ENCODE measurements at regions of chr17 and their contacts with region 1.

Region 1: DNA sequence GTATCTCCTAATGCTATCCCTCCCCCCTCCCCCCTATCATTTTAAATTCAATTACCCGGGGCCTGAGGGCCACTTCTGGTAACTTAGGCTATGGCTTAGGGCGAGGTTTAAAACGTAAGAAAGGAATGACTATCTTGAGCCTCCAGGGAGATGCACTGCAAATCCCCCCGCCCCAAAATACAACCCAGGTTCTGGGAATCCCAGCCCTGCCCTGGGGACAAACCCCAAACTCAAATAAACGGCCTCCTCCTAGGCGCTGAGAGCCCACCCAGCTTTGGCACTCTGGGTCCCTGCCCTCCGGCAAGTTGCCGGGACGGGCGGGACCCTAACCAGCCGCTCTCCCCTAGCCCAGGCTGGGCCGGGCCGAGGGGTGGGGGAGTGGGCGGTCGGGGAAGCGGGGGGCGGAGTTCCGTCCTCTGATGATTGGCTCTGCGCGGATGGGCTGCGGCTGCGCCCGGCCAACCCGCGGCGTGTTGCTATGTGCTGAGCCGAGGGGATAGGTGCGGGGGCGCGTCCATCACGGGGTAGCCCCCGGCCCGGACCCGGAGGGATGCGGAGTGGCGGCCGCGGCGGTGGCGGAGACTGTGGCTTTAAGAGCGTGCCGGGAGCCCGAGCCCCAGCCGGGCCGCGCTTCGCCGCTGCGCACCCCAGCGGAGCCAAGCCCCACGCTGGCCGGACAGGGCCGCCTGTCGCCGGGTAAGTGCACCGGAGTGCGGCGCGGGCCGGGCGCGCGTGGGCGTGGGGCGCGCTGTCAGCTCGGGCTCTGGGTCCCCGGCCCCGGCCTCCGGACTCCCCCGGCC is at the start of gene YPEL2:
- DNase-seq: peak; percentile 98 to 99 (median 98)
- ATAC-seq: peak; percentile 95 to 97
- H3K4me3 ChIP-seq: peak within 1 kb of the TSS; percentile 93
- H3K27ac ChIP-seq: peak within 1 kb of the TSS; percentile 96
- H3K4me1 ChIP-seq: peaks cover 15% of the 10 kb centered on the region
- H3K27me3 ChIP-seq: no peaks in the 10 kb centered on the region
- total RNA-seq, gene YPEL2: 14.5 to 33.9 (median 23.2) TPM

Region 2: GRCh38 chr17:59287452-59287851 is 43.9 kb before region 1 on chr17:
- intact Hi-C with region 1: no loop called
- DNase-seq: no peak
- ATAC-seq: peak; percentile 33 to 58
- H3K4me3 ChIP-seq: no peak overlapping the region
- H3K27ac ChIP-seq: no peak overlapping the region
- H3K4me1 ChIP-seq: no peaks in the 10 kb centered on the region
- H3K27me3 ChIP-seq: no peaks in the 10 kb centered on the region

Region 3: DNA sequence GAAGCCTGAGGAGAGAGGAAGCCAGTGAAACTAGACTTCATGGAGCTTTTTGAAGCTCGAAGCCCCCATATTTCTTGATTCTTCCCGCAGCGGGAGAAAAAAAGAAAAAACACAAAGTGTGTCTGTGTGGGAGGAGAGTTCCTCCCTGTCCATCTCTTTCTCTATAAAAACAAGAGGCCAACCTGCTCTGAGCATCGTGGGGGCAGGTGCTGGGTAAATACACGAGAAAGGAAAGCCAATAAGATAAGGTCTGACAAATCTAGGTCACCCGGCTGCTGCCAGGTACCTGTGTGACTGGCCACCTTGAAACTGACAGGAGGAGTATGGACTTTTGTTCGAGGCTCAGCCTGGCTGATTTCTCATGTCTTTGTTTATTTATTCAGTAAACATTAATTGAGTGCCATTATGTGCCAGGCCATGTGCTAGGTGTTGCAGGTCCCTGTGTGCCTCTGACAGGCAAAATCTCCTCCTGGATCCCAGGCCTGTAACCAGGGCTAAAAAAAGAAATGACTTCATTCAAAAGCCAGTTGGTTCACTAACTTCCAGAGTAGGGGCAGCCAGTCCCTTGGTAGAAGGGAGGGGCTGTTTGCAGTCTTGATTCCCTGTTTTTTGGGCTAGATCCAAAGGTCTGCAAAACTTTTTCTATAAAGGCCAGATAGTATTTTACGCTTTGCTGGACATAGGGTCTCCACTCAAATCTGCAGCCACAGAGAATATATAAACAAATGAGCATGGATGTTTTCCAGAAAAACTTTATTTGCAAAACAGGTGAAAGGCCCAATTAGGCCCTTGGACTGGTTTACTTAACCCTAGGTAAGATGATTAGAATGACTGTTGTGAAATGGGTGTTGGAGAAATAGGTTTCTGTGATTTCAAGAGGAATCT is 35.7 kb after region 1 on chr17:
- intact Hi-C with region 1: loop called in 2 of 4 experiments (anchors 2 to 5 kb)
- DNase-seq: peak in 1 of 3 donors; percentile 53
- ATAC-seq: peak; percentile 75 to 76
- H3K4me3 ChIP-seq: no peak overlapping the region
- H3K27ac ChIP-seq: peak overlapping the region; percentile 99
- H3K4me1 ChIP-seq: peaks cover 62% of the 10 kb centered on the region
- H3K27me3 ChIP-seq: no peaks in the 10 kb centered on the region

Region 4: GRCh38 chr17:59372138-59372857 is 41.0 kb after region 1 on chr17:
- intact Hi-C with region 1: loop called in 2 of 4 experiments (anchors 2 to 5 kb)
- DNase-seq: peak in 1 of 3 donors; percentile 51
- ATAC-seq: peak; percentile 79 to 92
- H3K4me3 ChIP-seq: no peak overlapping the region
- H3K27ac ChIP-seq: peak overlapping the region; percentile 97
- H3K4me1 ChIP-seq: peaks cover 56% of the 10 kb centered on the region
- H3K27me3 ChIP-seq: no peaks in the 10 kb centered on the region

Region 5: DNA sequence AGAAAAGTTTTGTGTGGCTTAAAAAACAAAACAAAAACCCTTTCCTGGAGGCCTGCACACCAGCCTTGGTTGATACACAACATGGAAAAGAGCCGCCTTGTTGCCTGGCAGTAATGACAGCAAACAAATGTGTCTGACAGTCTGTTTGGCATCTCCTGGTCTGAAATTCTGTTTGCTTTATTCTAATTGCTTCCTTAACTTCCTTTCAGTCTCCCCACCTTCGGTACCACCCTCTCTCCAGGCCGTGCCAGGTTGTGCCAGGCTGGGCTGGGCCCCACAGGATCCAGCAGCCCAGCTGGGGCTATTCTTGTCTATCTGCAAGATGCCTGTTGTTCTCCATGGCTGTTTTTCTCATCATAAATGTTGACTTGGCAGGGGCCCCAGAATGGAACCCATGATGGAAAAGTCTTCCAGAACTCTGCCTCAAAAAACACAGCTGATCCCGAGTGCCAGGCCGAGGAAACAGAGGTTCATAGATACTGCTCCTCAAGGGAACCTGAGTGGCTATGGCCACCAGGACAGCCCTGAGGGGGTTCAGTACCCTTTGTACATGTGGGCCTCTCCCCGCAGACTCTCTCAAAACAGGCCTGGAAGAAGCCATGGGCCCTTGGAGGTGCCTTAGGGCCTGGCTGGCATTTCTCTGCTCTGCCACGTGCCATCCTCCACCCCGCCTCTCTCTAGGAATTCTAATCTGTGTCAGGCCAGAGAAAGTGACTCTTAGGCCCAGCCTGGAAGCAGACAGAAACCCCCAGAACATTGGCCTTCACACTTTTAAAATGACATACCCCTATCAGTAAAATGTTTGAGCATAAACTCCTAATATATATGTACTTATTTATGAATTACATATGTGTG is 50.6 kb after region 1 on chr17:
- intact Hi-C with region 1: loop called in 1 of 4 experiments (anchors 10 kb)
- DNase-seq: peak; percentile 51 to 78 (median 77)
- ATAC-seq: peak; percentile 81 to 82
- H3K4me3 ChIP-seq: no peak overlapping the region
- H3K27ac ChIP-seq: peak overlapping the region; percentile 94
- H3K4me1 ChIP-seq: peaks cover 24% of the 10 kb centered on the region
- H3K27me3 ChIP-seq: no peaks in the 10 kb centered on the region

Region 6: DNA sequence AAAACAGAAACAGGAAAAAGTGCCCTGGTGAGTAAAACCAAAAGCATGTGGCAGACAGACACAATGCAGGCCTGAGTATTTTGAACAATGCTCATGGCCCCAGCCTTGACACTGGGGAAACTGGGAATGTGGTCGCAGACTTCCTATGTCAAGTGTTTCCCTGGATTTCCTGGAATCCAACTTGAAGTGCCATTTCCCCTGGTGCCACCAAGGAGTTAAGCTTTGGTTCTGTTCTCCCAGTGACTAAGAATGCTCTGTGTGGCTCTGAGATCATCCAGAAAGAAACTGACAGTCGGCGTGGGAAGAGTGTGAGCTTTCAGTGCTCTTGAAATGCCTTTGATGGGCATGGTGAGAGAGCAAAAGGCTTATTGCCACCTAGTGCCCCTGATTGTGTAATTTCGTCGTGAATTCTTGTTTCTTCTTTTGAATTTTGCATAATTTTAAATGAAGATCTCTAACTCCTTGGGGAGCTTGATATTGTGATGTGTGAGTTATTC is 96.1 kb after region 1 on chr17:
- intact Hi-C with region 1: loop called in 2 of 4 experiments (anchors 5 to 10 kb)
- DNase-seq: no peak
- ATAC-seq: peak; percentile 40 to 51
- H3K4me3 ChIP-seq: no peak overlapping the region
- H3K27ac ChIP-seq: peak overlapping the region; percentile 62
- H3K4me1 ChIP-seq: peaks cover 23% of the 10 kb centered on the region
- H3K27me3 ChIP-seq: no peaks in the 10 kb centered on the region

Region 7: GRCh38 chr17:59435238-59435637 is 103.9 kb after region 1 on chr17:
- intact Hi-C with region 1: loop called (anchors 2 to 5 kb)
- DNase-seq: no peak
- ATAC-seq: no peak
- H3K4me3 ChIP-seq: no peak overlapping the region
- H3K27ac ChIP-seq: no peak overlapping the region
- H3K4me1 ChIP-seq: peaks cover under 1% of the 10 kb centered on the region
- H3K27me3 ChIP-seq: no peaks in the 10 kb centered on the region

Region 8: GRCh38 chr17:59440784-59441441 is 109.6 kb after region 1 on chr17:
- intact Hi-C with region 1: loop called in 3 of 4 experiments (anchors 2 to 5 kb)
- DNase-seq: peak; percentile 89 to 95 (median 90)
- ATAC-seq: peak; percentile 92 to 96
- H3K4me3 ChIP-seq: no peak overlapping the region
- H3K27ac ChIP-seq: peak overlapping the region; percentile 89
- H3K4me1 ChIP-seq: peaks cover 2% of the 10 kb centered on the region
- H3K27me3 ChIP-seq: no peaks in the 10 kb centered on the region